Panc1 (cell line): ENCODE measurements at regions of chr4 and their contacts with region 1.

Region 1: DNA sequence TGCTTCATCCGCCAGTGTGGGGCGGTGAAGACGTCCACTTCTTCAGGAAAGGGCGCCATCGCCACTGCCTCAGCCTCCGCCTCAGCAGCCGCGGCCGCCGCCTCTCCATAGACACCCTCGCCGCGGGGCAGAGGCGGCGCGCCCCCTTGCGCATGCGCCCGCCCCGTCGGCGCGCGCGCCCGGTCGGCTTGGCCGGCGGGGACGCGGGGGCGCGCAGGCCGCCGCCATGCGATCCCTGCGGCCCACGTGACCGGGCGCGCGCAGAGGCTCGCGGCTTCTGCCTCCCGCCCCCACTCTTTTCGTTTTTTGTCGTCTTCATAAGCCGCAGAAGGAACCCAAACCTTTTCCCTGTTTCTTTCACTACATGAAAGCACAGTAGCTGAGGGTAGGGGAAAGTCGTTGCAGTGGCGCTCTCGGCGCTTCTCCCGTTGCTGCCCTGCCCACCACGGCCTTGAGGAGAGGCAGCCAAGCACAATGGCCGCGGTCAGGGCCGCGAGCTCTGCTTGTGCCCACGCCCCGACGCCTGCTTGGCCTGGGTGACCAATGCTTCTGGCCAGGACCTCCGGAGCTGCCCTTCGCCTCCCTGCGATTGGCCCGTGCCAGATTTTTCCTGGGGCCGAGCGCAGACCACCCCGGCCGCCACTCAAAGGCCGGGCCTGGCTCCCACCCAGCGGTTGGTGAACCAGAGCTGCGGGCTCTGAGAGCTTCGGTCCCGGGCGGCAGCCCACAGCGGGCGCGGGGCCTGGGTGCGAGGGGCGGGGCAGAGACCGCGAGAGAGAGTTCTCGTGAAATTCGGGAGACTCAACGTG is at the start of gene FBXL5:
- DNase-seq: no peak
- ATAC-seq: peak; percentile 88
- H3K4me3 ChIP-seq: peak within 1 kb of the TSS; percentile 67 to 72
- H3K27ac ChIP-seq: peak within 1 kb of the TSS; percentile 90
- H3K4me1 ChIP-seq: peaks cover 15% of the 10 kb centered on the region; the same call in 1 of the 2 replicates
- H3K27me3 ChIP-seq: no peaks in the 10 kb centered on the region
- CTCF ChIP-seq: no peak
- total RNA-seq, gene FBXL5: 20.2 TPM

Region 2: DNA sequence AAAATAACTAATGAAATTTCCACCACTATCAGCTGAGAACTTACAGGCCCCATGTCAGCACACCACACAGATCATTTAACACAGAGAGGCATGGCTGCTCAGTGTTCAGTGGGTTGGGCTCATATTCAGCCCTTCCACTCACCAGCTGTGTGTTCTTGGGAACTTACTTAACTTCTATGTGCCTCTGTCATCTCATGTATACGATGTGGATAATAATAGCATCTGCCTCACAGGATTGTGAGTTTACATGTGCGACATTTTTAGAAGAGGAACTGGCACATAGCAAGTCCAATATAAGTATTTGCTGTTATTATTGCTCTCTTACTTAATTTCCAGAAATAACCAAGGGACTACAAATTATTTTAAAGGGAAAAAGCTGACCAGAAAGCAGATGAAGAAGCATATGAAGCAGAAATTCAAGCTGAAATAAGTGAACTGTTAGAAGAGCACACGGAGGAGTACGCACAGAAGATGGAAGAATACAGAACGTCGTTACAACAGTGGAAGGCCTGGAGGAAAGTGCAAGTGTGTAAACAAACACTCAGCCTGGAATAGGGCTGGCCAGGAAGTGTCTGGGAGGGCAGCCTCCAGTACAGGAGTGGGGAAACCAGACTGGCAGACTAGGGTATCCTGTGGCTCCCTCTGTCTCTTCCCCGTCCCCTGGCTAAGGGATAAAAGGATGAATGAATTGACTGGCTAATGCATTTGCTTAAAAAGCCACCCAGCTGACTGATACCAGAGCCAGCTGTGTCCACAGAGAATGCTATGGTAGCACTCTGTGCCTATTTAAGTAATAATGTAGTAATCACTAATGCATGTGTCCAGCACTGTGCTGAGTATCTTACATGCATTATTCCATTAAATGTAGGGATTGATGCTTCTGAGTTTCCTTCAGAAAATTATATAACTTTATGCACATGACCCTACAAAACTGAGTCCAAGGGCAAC is 118.6 kb before region 1 on chr4:
- CTCF ChIA-PET with region 1: interaction called, 13 read pairs
- POLR2A ChIA-PET with region 1: no interaction called
- in situ Hi-C with region 1: no loop called
- intact Hi-C with region 1: no loop called
- DNase-seq: no peak
- ATAC-seq: no peak
- H3K4me3 ChIP-seq: no peak overlapping the region
- H3K27ac ChIP-seq: no peak overlapping the region
- H3K4me1 ChIP-seq: no peaks in the 10 kb centered on the region
- H3K27me3 ChIP-seq: no peaks in the 10 kb centered on the region
- CTCF ChIP-seq: no peak